ENCODE measurements at regions of chr11 and their contacts with region 1.

Region 1: GRCh38 chr11:100612766-100613165 is 74.3 kb upstream of the ARHGAP42 start:
- DNase-seq: no peak
- ATAC-seq: no peak
- H3K4me3 ChIP-seq: no peak overlapping the region
- H3K4me3 Mint-ChIP-seq: no peak overlapping the region
- H3K27ac ChIP-seq: no peak overlapping the region
- H3K27ac Mint-ChIP-seq: no peak overlapping the region
- H3K4me1 ChIP-seq: no peaks in the 10 kb centered on the region
- H3K4me1 Mint-ChIP-seq: no peaks in the 10 kb centered on the region
- H3K27me3 ChIP-seq: no peaks in the 10 kb centered on the region
- H3K27me3 Mint-ChIP-seq: no peaks in the 10 kb centered on the region

Region 2: GRCh38 chr11:101508370-101508769 is 895.6 kb after region 1 on chr11:
- CTCF ChIA-PET with region 1: no interaction called
- POLR2A ChIA-PET with region 1: interaction called in 1 of 2 experiments, 13 read pairs
- DNase-seq: no peak
- ATAC-seq: no peak
- H3K4me3 ChIP-seq: no peak overlapping the region
- H3K4me3 Mint-ChIP-seq: no peak overlapping the region
- H3K27ac ChIP-seq: no peak overlapping the region
- H3K27ac Mint-ChIP-seq: no peak overlapping the region
- H3K4me1 ChIP-seq: no peaks in the 10 kb centered on the region
- H3K4me1 Mint-ChIP-seq: no peaks in the 10 kb centered on the region
- H3K27me3 ChIP-seq: no peaks in the 10 kb centered on the region
- H3K27me3 Mint-ChIP-seq: no peaks in the 10 kb centered on the region

Measured in T-cell (primary cell).